ENCODE measurements at regions of chr10 and their contacts with region 1.

Region 1: GRCh38 chr10:3785257-3785850 is 345 bp upstream of the KLF6 start:
- DNase-seq: peak; percentile 100
- CTCF ChIP-seq: no peak

Region 2: DNA sequence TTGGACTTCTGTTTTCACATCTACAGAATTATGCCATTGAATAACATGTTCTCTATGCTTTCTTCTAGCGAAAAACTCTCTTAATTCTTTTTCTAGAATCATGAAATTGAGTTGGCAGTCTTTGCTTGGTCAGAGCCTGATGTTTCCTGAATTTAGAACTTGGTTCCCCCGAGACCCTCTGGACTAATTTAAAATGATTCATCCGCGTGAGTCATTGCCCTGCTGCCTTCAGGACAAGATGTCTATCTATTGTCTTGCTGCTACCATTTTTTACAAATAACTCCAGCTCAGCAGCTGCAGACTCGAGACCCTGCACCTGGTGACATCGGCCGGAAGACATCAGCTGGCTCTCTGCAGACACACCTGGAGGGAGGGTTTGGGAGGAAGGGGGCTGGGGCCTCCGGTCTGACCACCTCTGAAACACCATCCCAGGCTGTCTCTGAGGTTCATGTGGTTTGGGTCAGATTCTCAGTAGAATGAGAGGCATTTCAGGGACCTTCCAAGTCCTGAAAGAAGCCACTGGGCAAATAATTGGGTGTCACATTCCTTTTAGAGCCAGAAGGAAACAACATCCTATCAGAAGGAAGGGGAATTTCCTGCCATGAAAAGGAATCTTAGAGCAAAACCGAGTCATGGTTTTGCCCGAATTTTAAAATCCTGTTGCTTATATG is 20.6 kb after region 1 on chr10:
- CTCF ChIA-PET with region 1: interaction called, 5 read pairs
- POLR2A ChIA-PET with region 1: interaction called, 26 read pairs
- DNase-seq: peak; percentile 45
- CTCF ChIP-seq: no peak

Region 3: DNA sequence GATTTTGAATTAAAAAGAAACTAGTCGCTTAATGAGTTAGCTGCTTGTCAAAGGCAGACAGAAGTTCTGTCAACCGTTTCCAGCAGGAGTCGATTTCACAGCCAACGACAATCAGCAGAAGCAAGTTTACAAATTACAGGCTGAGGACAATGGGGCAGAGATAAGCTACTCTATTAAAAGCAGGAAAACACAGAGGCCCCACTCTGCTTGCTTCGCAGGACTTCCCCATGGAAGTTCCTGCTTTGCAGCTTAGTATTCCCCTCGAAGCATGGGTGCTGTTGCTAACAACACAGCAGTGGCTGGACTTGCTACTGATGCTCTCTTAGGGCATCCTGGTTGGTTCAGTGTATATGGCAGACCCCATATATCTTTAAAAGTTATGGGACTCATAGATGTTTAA is 50.4 kb after region 1 on chr10:
- CTCF ChIA-PET with region 1: interaction called, 3 read pairs
- POLR2A ChIA-PET with region 1: interaction called, 12 read pairs
- DNase-seq: no peak
- CTCF ChIP-seq: no peak

Region 4: GRCh38 chr10:3866332-3866731 is 81.0 kb after region 1 on chr10:
- CTCF ChIA-PET with region 1: no interaction called
- POLR2A ChIA-PET with region 1: interaction called, 11 read pairs
- DNase-seq: no peak
- CTCF ChIP-seq: no peak

Region 5: GRCh38 chr10:4067531-4067930 is 282.2 kb after region 1 on chr10:
- CTCF ChIA-PET with region 1: no interaction called
- POLR2A ChIA-PET with region 1: no interaction called
- DNase-seq: peak; percentile 33
- CTCF ChIP-seq: no peak

Measured in GM10248 (cell line).